PC-3 (cell line): ENCODE measurements at regions of chr17 and their contacts with region 1.

Region 1: GRCh38 chr17:60135151-60135950 is 14.4 kb upstream of the CA4 start:
- DNase-seq: peak; percentile 97
- ATAC-seq: peak; percentile 97
- H3K4me3 ChIP-seq: peak overlapping the region; percentile 77
- H3K27ac ChIP-seq: peak overlapping the region; percentile 1
- H3K4me1 ChIP-seq: peaks cover 9% of the 10 kb centered on the region
- H3K27me3 ChIP-seq: peaks cover 3% of the 10 kb centered on the region; the same call in 1 of the 2 replicates
- CTCF ChIP-seq: no peak

Region 2: DNA sequence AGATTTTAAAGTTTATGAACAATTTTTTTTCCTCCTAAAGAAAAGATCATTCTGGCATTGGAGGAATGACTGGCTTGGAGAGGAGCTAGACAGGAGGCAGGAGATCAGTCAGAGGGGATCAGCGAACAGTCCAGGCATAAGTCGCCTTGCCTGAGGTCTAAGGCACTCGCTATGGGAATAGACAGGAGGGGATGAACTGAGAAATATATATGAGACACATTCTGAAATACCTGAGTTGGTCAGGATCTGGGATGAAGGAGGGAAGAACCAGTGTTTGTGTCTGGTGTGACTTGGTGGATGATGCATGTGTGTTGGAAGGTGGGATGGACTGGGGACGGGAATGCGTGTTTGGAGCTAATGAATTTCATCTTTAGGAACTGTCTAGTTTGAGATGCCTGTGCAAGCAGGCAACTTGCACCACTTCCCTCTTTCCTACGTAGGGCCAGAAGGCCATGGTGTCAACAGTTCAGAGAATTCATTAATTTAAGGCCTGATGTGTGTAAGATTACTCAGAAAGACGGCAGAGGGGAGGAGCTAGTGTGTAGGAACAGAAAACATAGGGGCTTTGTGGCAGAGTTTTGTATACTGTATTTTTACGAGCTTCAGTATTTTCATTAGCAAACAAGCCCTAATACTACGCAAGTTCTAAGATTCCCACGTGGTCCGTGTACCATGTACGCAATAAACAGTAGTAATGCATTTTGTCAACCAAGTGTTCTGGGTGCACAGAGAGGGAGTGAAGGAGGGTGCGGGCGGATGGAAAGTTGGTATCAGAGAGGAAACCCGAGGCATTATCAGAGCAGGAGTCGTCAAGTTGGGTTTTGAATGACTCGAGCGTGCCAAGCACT is 57.5 kb before region 1 on chr17:
- CTCF ChIA-PET with region 1: no interaction called
- POLR2A ChIA-PET with region 1: no interaction called
- intact Hi-C with region 1: loop called (anchors 2 kb)
- DNase-seq: no peak
- ATAC-seq: peak; percentile 17
- H3K4me3 ChIP-seq: peak overlapping the region; percentile 82
- H3K27ac ChIP-seq: peak overlapping the region; percentile 76
- H3K4me1 ChIP-seq: peaks cover 37% of the 10 kb centered on the region
- H3K27me3 ChIP-seq: no peaks in the 10 kb centered on the region
- CTCF ChIP-seq: no peak